Tibial artery (tissue), 4 donors: ENCODE measurements at regions of chr4 and their contacts with region 1.

Region 1: GRCh38 chr4:165464813-165465381 is 86.1 kb downstream of the CPE start:
- DNase-seq: no peak
- H3K4me3 ChIP-seq: no peak overlapping the region
- H3K27ac ChIP-seq: peak overlapping the region in 1 of 2 donors; percentile 38
- H3K4me1 ChIP-seq: peaks cover 0 to 37% (median 20%) of the 10 kb centered on the region in 4 donors
- H3K27me3 ChIP-seq: no peaks in the 10 kb centered on the region
- CTCF ChIP-seq: peak; percentile 75 to 82

Region 2: GRCh38 chr4:165111906-165112367 is 353.0 kb before region 1 on chr4:
- intact Hi-C with region 1: no loop called
- DNase-seq: no peak
- H3K4me3 ChIP-seq: peak overlapping the region; percentile 87 to 99
- H3K27ac ChIP-seq: peak overlapping the region; percentile 89 to 97
- H3K4me1 ChIP-seq: peaks cover 0 to 6% (median 0%) of the 10 kb centered on the region in 4 donors
- H3K27me3 ChIP-seq: no peaks in the 10 kb centered on the region
- CTCF ChIP-seq: no peak

Region 3: DNA sequence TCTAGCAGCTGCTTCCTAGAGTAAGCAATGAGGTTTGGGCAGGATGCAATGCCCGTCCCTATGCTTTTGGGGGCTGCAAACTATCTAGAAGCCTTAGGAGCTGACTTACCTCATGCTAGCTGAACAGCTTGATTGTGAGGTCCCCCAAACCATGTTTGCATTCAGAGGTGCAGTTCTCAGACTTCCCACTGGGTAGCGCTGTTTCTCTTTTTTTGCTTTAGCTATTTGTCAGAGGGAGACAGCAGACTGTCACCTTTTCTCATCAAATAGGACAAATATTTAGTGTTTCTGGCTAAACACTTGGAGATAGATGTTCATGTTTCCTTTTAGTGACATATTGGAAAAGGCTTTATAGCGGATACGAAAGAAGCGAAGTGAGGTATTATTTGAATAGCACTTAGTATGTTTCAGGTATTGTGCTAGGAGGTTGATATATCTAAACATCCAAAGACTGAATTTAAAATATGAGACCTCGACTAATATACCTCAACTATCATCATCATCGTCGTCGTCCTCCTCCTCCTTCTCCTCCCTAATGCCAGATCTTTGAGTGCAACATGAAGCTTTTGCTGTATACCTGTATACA is 333.6 kb before region 1 on chr4:
- intact Hi-C with region 1: loop called (anchors 2 kb)
- DNase-seq: peak in 1 of 2 donors; percentile 57
- H3K4me3 ChIP-seq: no peak overlapping the region
- H3K27ac ChIP-seq: no peak overlapping the region
- H3K4me1 ChIP-seq: peaks cover 0 to 5% (median 0%) of the 10 kb centered on the region in 4 donors
- H3K27me3 ChIP-seq: no peaks in the 10 kb centered on the region
- CTCF ChIP-seq: peak; percentile 82 to 92

Region 4: DNA sequence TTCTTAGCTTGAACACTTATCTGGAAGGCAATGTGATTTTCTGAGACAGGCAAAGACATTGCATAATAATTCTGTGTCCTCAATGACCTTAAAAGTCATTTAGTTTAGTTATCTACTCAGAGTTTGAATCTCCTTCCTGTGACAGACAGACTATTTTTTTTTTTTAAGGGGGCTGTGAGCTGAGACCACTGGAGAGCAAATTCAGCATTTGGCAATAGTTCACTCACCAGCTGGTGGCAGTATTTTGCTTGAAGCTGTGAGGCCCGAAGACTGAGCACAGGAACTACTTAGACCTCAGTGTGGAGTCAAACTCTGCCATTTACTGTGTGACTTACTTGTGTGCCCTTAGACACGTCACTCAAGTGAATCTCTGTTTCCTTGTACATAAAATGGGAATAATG is 109.0 kb before region 1 on chr4:
- intact Hi-C with region 1: loop called (anchors 5 kb)
- DNase-seq: peak in 1 of 2 donors; percentile 40
- H3K4me3 ChIP-seq: no peak overlapping the region
- H3K27ac ChIP-seq: no peak overlapping the region
- H3K4me1 ChIP-seq: no peaks in the 10 kb centered on the region
- H3K27me3 ChIP-seq: peaks cover 0 to 3% of the 10 kb centered on the region in 2 donors
- CTCF ChIP-seq: peak; percentile 53 to 56

Region 5: DNA sequence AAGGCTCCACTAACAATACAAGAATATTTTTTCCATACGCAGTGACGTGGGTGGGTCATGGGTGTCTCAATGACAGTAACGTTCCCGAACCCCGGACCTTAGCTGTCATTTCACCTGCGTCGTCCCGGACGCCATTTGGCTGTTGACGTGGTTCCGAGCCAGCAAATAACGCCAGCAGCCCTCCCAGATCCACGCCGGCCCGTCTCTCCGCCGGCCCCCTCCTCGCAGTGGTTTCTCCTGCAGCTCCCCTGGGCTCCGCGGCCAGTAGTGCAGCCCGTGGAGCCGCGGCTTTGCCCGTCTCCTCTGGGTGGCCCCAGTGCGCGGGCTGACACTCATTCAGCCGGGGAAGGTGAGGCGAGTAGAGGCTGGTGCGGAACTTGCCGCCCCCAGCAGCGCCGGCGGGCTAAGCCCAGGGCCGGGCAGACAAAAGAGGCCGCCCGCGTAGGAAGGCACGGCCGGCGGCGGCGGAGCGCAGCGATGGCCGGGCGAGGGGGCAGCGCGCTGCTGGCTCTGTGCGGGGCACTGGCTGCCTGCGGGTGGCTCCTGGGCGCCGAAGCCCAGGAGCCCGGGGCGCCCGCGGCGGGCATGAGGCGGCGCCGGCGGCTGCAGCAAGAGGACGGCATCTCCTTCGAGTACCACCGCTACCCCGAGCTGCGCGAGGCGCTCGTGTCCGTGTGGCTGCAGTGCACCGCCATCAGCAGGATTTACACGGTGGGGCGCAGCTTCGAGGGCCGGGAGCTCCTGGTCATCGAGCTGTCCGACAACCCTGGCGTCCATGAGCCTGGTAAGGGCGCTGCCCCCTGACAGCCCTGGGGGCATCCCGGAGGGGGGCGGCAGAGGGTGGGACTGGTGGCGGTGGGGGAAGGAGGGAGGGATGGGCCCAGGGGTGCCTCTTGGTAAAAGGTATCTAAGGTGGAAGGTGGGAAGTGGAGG is 85.9 kb before region 1 on chr4 and contains the start of gene CPE:
- intact Hi-C with region 1: loop called (anchors 5 kb)
- DNase-seq: peak; percentile 83 to 93
- H3K4me3 ChIP-seq: peak within 1 kb of the TSS; percentile 68 to 80
- H3K27ac ChIP-seq: peak within 1 kb of the TSS; percentile 90 to 91
- H3K4me1 ChIP-seq: peaks cover 0 to 36% (median 4%) of the 10 kb centered on the region in 4 donors
- H3K27me3 ChIP-seq: no peaks in the 10 kb centered on the region
- CTCF ChIP-seq: peak; percentile 69 to 80

Region 6: DNA sequence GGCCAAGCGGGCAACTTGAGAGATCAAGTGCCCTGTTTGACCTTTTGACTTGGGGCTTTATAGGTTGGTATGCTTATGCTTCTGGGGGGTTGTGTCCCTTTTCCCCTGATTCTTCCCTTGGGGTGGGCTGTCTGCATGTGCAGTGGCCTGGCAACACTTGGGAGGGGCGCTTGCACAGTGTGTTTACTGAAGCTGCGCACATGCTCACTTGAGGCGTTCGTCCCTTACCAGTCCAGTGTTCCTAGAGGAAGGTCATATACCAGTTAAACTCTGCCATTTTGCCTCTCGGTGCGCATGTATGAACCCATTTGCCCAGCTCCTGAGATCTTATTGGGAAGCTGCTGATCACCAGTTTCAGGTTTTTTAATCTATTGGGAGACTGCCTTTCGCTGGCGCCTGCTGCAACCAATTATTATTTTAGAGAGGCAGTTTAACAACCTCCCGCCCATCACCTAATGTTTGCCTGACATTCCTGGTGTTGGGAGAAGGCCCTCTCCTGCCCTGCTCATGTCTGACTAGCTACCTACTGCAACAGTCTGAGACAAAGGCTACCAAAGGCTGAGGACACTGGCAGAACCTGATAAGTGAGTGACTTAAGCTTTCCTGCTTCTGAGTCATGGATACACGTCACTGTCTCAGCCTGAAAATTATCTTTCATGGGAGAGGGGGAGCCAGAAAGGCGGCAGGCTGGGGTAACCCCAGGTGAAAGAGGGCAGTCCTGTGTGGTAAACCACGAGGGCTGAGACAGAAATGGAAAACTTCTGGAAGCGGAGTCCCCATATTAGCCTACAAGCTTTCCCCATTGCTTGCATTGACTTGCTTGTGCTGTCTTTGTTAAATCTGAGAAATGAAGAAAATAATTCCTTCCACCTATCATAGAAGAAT is 11.6 kb after region 1 on chr4:
- intact Hi-C with region 1: no loop called
- DNase-seq: no peak
- H3K4me3 ChIP-seq: no peak overlapping the region
- H3K27ac ChIP-seq: no peak overlapping the region
- H3K4me1 ChIP-seq: peaks cover 0 to 9% (median 0%) of the 10 kb centered on the region in 4 donors
- H3K27me3 ChIP-seq: no peaks in the 10 kb centered on the region
- CTCF ChIP-seq: no peak